ENCODE measurements at regions of chr16 and their contacts with region 1.

Region 1: DNA sequence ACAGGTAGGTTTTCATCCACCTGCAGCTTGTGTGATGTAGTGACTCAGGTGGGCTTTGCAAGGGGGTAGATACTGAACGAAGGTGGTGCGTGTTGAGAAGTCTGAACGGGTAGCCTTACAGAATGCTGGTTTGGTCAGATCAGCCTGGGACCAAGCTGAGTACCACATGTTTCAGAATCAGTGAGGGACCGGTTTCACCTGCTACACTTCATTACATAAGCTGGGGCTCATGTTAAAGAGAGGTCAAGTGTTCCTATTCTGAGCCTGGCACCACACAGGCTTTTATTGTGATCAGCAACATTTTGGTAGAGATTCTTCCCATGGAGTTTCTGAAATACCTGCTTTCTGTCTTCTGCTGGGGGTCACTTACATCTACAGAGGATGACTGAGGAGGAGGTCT is 207.4 kb upstream of the EEF2KMT start:
- DNase-seq: no peak
- H3K4me3 ChIP-seq: no peak overlapping the region
- H3K27ac ChIP-seq: no peak overlapping the region
- H3K4me1 ChIP-seq: no peaks in the 10 kb centered on the region
- H3K27me3 ChIP-seq: no peaks in the 10 kb centered on the region
- CTCF ChIP-seq: no peak

Region 2: GRCh38 chr16:5496013-5496412 is 191.0 kb after region 1 on chr16:
- intact Hi-C with region 1: loop called (anchors 2 kb)
- DNase-seq: no peak
- H3K4me3 ChIP-seq: no peak overlapping the region
- H3K27ac ChIP-seq: no peak overlapping the region
- H3K4me1 ChIP-seq: no peaks in the 10 kb centered on the region
- H3K27me3 ChIP-seq: no peaks in the 10 kb centered on the region
- CTCF ChIP-seq: no peak

Region 3: GRCh38 chr16:5590416-5590815 is 285.4 kb after region 1 on chr16:
- intact Hi-C with region 1: no loop called
- DNase-seq: no peak
- H3K4me3 ChIP-seq: no peak overlapping the region
- H3K27ac ChIP-seq: no peak overlapping the region
- H3K4me1 ChIP-seq: no peaks in the 10 kb centered on the region
- H3K27me3 ChIP-seq: no peaks in the 10 kb centered on the region
- CTCF ChIP-seq: no peak

Measured in tibial artery (tissue), 4 donors.